ENCODE measurements at regions of chr14 and their contacts with region 1.

Region 1: GRCh38 chr14:102333795-102334705 is 14.5 kb downstream of the ZNF839 start:
- DNase-seq: no peak
- ATAC-seq: no peak
- H3K4me3 ChIP-seq: no peak overlapping the region
- H3K27ac ChIP-seq: no peak overlapping the region
- H3K4me1 ChIP-seq: no peaks in the 10 kb centered on the region
- H3K27me3 ChIP-seq: no peaks in the 10 kb centered on the region
- CTCF ChIP-seq: no peak

Region 2: DNA sequence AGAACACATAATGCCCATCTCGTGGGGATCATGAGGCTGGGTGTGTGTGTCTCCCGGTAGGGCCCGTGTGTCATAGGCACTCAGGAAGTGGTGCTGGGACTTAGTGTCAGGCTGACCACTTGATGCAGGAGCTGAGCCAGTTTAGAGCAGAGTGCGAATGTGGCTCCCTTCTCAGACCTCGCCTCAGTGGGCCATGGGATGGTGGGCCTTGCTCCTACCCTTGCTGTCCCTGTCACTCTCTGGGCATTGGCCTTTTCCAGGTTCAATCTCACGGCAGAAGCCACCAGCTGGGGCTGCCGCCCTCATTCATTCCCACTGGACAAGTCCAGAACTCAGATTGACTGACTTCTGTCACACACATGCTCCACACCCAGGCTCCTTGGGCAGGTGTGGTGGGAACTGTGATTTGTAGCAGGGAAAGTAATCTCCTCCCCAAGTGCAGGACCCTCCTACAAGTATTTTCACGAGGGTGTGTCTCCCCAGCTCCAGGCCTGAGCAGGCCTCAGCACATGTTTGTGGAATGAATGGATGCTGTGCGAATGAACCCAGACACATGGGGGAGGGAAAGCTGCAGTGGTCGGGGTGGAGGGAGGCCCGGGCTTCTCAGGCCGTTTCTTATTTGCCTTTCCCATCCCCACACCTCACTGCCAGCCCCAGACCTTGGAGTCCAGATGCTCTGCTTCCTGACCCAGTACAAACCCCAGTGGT is 1801.7 kb before region 1 on chr14:
- CTCF ChIA-PET with region 1: no interaction called
- POLR2A ChIA-PET with region 1: interaction called, 15 read pairs
- in situ Hi-C with region 1: no loop called
- intact Hi-C with region 1: no loop called
- DNase-seq: no peak
- ATAC-seq: peak; percentile 10
- H3K4me3 ChIP-seq: no peak overlapping the region
- H3K27ac ChIP-seq: peak overlapping the region; percentile 44
- H3K4me1 ChIP-seq: peaks cover 34% of the 10 kb centered on the region
- H3K27me3 ChIP-seq: no peaks in the 10 kb centered on the region
- CTCF ChIP-seq: no peak

Region 3: GRCh38 chr14:102005336-102005735 is 328.7 kb before region 1 on chr14:
- CTCF ChIA-PET with region 1: interaction called, 10 read pairs
- POLR2A ChIA-PET with region 1: no interaction called
- in situ Hi-C with region 1: no loop called
- intact Hi-C with region 1: no loop called
- DNase-seq: no peak
- ATAC-seq: no peak
- H3K4me3 ChIP-seq: no peak overlapping the region
- H3K27ac ChIP-seq: no peak overlapping the region
- H3K4me1 ChIP-seq: no peaks in the 10 kb centered on the region
- H3K27me3 ChIP-seq: no peaks in the 10 kb centered on the region
- CTCF ChIP-seq: no peak

Region 4: DNA sequence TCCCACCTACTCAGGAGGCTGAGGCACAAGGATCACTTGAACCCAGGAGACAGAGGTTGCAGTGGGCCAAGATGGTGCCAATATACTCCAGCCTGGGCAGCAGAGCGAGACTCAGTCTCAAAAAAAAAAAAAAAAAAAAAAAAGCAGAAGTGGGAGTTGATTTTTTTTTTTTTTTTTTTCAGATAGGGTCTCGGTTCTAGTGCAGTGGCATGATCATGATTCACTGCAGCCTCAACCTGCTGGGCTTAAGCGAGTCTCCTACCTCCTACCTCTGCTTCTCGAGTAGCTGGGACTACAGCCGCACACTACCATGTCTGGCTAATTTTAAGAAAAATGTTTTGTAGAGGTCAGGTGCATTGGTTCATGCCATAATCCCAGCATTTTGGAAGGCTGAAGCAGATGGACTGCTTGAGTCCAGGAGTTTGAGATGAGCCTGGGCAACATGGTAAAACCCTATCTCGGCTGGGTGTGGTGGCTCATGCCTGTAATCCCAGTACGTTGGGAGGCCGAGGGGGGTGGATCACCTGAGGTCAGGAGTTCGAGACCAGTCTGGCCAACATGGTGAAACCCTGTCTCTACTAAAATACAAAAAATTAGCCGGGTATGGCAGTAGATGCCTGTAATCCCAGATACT is 230.9 kb before region 1 on chr14:
- CTCF ChIA-PET with region 1: no interaction called
- POLR2A ChIA-PET with region 1: no interaction called
- in situ Hi-C with region 1: no loop called
- intact Hi-C with region 1: no loop called
- DNase-seq: no peak
- ATAC-seq: no peak
- H3K4me3 ChIP-seq: no peak overlapping the region
- H3K27ac ChIP-seq: no peak overlapping the region
- H3K4me1 ChIP-seq: no peaks in the 10 kb centered on the region
- H3K27me3 ChIP-seq: no peaks in the 10 kb centered on the region
- CTCF ChIP-seq: no peak

Region 5: DNA sequence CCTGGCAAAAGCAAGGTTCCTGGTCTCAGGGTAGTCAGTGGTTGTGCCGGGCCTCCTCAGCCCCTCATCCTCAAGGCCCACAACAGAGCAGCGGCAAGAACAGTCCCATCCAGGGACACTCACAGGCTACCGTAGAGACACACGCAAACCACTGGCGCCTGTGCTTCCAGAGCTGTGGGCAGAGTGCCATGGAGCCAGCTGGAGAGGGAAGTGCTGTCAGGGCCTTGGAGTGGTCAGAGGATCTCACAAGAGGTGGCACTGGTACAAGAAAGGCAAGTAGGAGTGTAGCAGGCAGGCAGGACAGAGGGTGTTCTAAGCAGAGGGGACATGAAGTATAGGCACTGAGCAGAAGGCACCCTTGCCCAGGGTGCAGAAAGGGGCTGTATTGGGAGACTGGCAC is 140.9 kb after region 1 on chr14:
- CTCF ChIA-PET with region 1: no interaction called
- POLR2A ChIA-PET with region 1: no interaction called
- in situ Hi-C with region 1: no loop called
- intact Hi-C with region 1: no loop called
- DNase-seq: no peak
- ATAC-seq: no peak
- H3K4me3 ChIP-seq: no peak overlapping the region
- H3K27ac ChIP-seq: no peak overlapping the region
- H3K4me1 ChIP-seq: no peaks in the 10 kb centered on the region
- H3K27me3 ChIP-seq: no peaks in the 10 kb centered on the region
- CTCF ChIP-seq: no peak

Measured in Panc1 (cell line).